PC-3 (cell line): ENCODE measurements at regions of chrX and their contacts with region 1.

Region 1: GRCh38 chrX:106263817-106264216 is 95.7 kb downstream of the PWWP3B start:
- DNase-seq: peak; percentile 69
- ATAC-seq: peak; percentile 75
- H3K4me3 ChIP-seq: no peak overlapping the region
- H3K27ac ChIP-seq: no peak overlapping the region
- H3K4me1 ChIP-seq: peaks cover 12% of the 10 kb centered on the region; the same call in 1 of the 2 replicates
- H3K27me3 ChIP-seq: no peaks in the 10 kb centered on the region
- CTCF ChIP-seq: no peak

Region 2: DNA sequence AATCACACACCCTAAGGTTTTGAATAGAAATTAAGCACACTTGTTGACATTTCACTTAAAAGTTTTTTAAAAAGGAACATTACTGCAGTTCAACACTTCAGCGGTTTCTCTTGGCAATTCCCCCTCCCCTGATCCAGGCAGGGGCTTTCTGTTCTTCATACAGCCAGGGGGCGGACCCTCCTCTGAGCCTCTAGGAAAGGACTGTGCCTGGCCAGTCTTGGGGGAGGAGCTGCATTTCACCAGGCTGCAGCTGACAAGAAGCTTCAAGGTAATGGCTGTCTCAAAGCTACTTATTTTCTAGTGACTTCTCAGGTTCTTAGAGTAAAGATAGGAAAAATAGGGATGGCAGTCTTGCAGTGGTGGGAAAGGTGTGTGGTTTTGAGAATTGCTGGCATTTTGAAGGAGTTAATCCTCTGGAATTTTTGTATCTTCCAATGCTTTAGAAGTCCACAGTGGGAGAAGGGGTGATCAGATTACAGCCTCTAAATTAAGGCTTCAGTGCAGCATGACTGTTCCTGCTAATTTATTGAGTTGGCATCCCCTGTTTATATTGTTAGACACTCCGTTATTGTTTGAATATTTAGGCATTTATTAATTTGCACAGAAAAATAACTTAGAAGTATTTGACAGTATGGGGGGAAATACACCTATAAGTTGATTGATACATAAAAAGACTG is 62.2 kb before region 1 on chrX:
- CTCF ChIA-PET with region 1: no interaction called
- POLR2A ChIA-PET with region 1: no interaction called
- intact Hi-C with region 1: loop called (anchors 10 kb)
- DNase-seq: no peak
- ATAC-seq: no peak
- H3K4me3 ChIP-seq: no peak overlapping the region
- H3K27ac ChIP-seq: no peak overlapping the region
- H3K4me1 ChIP-seq: peaks cover 5% of the 10 kb centered on the region; the same call in 1 of the 2 replicates
- H3K27me3 ChIP-seq: no peaks in the 10 kb centered on the region
- CTCF ChIP-seq: no peak